Activated naive CD4-positive, alpha-beta T cell treated with anti-CD3 and anti-CD28 coated beads for 36 hours (primary cell): ENCODE measurements at regions of chr12 and their contacts with region 1.

Region 1: DNA sequence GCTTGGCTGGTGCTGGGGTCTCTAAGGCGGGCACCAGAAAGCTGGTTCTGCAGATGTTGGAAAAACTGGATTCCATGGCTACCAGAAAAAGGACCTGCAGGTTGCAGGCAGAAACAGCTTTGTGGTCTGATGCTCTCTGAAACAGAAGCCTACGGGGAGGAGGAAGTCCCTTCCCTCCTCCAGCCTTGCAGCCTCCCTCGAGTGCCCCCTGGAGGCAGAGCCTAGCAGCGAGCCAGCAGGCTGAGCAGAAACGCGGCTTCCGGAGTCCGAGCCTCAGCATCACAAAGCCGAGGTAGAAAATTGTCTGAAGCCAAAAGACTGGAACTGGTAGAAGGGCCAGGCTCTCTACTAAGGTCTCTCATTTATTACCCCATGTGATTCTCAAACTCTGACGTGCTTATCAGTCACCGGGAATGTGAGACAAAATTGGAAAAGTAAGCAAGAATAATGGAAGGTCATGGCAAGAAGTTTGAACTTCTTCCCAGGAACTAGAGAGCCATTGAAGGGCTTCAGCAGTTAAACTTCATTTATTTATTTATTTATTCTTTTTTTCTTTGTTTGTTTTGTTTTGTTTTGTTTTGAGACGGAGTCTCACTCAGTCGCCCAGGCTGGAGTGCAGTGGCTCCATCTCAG is 82.2 kb upstream of the CPSF6 start:
- DNase-seq: peak; percentile 96
- H3K4me3 Mint-ChIP-seq: peak overlapping the region; percentile 43
- H3K27ac Mint-ChIP-seq: no peak overlapping the region
- H3K4me1 Mint-ChIP-seq: peaks cover 51% of the 10 kb centered on the region
- H3K27me3 Mint-ChIP-seq: no peaks in the 10 kb centered on the region

Region 2: DNA sequence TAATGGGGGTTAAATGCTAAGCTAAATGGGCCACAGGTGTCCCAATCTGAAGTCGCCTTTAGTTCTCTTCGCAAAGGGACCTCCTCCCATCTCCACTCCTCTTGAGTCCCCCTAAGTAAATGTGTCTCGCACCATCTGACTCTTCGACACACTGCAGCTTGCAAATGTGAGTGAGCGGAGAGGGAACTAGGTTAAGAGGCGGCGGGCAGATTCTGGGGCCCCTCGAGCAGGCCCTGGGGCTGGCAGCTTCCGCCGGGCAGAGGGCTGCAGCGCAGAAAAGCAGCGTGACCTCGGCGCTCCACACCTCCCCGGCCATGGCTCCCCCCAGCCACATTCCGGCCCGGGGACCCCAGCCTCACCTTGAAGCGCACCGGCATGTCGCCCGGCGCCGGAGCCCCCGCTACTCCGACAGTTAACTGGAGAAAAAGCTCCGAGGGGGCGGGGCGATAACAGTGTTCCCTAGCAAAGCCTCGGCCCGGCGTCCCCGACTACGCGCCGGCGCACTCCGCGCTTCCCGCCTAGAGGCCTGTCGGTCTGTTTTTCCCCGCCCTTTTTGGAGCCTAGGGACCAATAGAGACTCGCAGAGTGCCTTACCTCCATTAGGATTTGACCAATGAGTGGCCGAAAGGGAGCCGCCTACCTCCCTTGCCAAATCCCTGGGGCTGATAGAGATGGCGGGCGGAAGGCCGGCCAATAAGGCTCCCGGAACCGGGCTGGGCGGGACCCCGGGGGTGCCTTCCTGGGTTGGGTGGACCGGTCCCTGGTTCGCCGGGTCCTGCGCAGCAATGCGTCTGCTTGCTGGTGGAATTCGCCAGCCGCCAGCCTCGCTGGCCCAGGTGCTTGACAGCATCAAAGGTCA is 825.0 kb before region 1 on chr12 and contains the start of gene MDM1:
- CTCF ChIA-PET with region 1: no interaction called
- intact Hi-C with region 1: loop called (anchors 10 kb)
- DNase-seq: peak; percentile 96
- H3K4me3 Mint-ChIP-seq: peak within 1 kb of the TSS; percentile 84
- H3K27ac Mint-ChIP-seq: peak within 1 kb of the TSS; percentile 73
- H3K4me1 Mint-ChIP-seq: peaks cover 47% of the 10 kb centered on the region
- H3K27me3 Mint-ChIP-seq: no peaks in the 10 kb centered on the region
- total RNA-seq, gene MDM1: 16.5 to 20.8 TPM

Region 3: GRCh38 chr12:68998041-68998440 is 159.1 kb before region 1 on chr12:
- CTCF ChIA-PET with region 1: no interaction called
- intact Hi-C with region 1: no loop called
- DNase-seq: no peak
- H3K4me3 Mint-ChIP-seq: no peak overlapping the region
- H3K27ac Mint-ChIP-seq: no peak overlapping the region
- H3K4me1 Mint-ChIP-seq: no peaks in the 10 kb centered on the region
- H3K27me3 Mint-ChIP-seq: peaks cover 7% of the 10 kb centered on the region

Region 4: DNA sequence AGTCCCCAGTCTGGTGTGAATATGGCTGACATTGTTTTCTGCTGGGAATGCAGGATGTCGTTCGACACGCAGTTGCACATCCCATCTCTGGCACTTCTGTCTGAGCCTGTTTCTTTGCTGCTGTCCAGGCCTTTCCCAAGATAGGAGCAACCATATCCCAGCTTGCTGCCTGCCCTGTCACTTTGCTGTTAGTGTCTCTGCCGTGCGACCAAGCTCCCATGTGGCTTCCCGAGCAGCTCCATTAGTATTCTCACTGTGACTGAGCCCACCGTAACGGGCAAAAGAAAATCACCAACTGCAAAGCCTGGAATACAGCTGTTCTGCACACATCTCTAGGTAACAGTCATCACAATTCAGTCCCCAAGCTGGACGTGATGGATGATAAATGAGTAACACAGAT is 16.2 kb after region 1 on chr12:
- CTCF ChIA-PET with region 1: interaction called, 26 read pairs
- intact Hi-C with region 1: no loop called
- DNase-seq: no peak
- H3K4me3 Mint-ChIP-seq: no peak overlapping the region
- H3K27ac Mint-ChIP-seq: no peak overlapping the region
- H3K4me1 Mint-ChIP-seq: no peaks in the 10 kb centered on the region
- H3K27me3 Mint-ChIP-seq: no peaks in the 10 kb centered on the region

Region 5: DNA sequence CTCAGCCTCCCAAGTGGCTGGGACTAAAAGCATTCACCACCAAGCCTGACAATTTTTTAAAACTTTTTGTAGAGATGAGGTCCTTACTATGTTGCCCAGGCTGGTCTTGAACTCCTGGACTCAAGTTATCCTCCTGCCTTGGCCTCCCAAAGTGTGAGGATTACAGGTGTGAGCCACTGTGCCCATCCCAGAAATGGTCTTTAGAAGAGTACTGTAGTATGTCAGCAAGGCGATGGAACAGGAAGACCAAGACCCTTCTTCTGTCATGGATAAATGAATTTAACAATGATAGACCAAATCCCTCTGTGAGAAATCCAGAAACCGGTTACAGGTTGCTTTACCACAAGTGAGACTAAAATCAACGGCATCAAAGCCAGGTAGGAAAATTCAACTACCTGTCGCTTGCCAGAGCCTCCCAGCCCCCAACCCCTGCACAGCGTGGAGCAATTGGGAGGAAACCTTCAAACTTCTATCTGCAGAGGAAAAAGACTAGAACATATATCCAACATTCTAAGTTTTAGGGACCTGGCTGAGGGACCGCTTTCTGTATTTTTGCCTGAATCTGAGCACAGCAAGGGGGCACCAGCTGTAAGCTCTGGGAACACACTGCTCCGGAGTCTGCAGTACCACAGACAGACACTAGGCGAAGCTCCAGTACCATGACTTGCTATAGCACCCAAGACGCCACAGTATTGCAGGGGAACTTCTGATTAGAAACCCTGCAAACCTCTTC is 133.6 kb after region 1 on chr12:
- CTCF ChIA-PET with region 1: interaction called, 9 read pairs
- intact Hi-C with region 1: loop called (anchors 1 kb)
- DNase-seq: peak; percentile 95
- H3K4me3 Mint-ChIP-seq: peak overlapping the region; percentile 5
- H3K27ac Mint-ChIP-seq: no peak overlapping the region
- H3K4me1 Mint-ChIP-seq: peaks cover 10% of the 10 kb centered on the region
- H3K27me3 Mint-ChIP-seq: peaks cover 5% of the 10 kb centered on the region

Region 6: DNA sequence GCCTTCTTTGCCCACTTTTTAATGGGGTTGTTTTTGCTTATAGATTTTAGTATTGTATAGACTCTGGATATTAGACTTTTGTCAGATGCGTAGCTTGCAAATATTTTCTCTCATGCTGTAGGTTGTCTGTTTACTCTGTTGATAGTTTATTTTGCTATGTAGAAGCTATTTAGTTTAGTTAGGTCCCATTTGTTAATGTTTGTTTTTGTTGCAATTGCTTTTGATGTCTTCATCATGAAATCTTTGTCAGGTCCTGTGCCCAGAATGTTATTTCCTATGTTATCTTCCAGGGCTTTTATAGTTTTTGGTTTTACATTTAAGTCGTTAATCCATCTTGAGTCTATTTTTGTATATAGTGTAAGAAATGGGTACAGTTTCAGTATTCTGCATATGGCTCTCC is 161.1 kb after region 1 on chr12:
- CTCF ChIA-PET with region 1: no interaction called
- intact Hi-C with region 1: no loop called
- DNase-seq: no peak
- H3K4me3 Mint-ChIP-seq: no peak overlapping the region
- H3K27ac Mint-ChIP-seq: no peak overlapping the region
- H3K4me1 Mint-ChIP-seq: no peaks in the 10 kb centered on the region
- H3K27me3 Mint-ChIP-seq: no peaks in the 10 kb centered on the region

Region 7: GRCh38 chr12:69570545-69571399 is 413.6 kb after region 1 on chr12:
- CTCF ChIA-PET with region 1: interaction called, 3 read pairs
- intact Hi-C with region 1: loop called (anchors 1 kb)
- DNase-seq: peak; percentile 75
- H3K4me3 Mint-ChIP-seq: no peak overlapping the region
- H3K27ac Mint-ChIP-seq: no peak overlapping the region
- H3K4me1 Mint-ChIP-seq: peaks cover 11% of the 10 kb centered on the region
- H3K27me3 Mint-ChIP-seq: no peaks in the 10 kb centered on the region

Region 8: DNA sequence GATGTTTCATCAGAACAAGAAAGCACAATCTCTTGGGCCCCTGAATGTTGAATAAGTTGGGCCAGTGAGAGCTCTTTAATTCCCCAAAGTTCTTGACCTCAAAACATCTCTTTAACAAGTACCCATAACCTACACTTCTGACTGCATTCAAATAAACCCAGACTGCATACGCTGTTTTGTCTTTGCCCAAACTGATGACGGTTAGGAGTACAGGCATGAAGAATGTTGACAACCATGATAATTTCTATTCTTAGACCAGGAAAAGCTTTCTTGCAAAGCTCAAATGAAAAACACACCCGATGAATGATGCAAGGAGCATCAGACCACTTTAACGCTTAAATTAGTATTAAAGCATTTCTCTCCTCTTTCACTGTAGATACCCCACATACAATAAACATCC is 569.8 kb after region 1 on chr12:
- CTCF ChIA-PET with region 1: no interaction called
- intact Hi-C with region 1: no loop called
- DNase-seq: no peak
- H3K4me3 Mint-ChIP-seq: no peak overlapping the region
- H3K27ac Mint-ChIP-seq: no peak overlapping the region
- H3K4me1 Mint-ChIP-seq: no peaks in the 10 kb centered on the region
- H3K27me3 Mint-ChIP-seq: no peaks in the 10 kb centered on the region

Region 9: GRCh38 chr12:69738351-69739286 is 581.5 kb after region 1 on chr12 and contains the start of gene RAB3IP:
- CTCF ChIA-PET with region 1: no interaction called
- intact Hi-C with region 1: loop called (anchors 1 kb)
- DNase-seq: peak; percentile 94
- H3K4me3 Mint-ChIP-seq: peak within 1 kb of the TSS; percentile 77
- H3K27ac Mint-ChIP-seq: peak within 1 kb of the TSS; percentile 75
- H3K4me1 Mint-ChIP-seq: peaks cover 18% of the 10 kb centered on the region
- H3K27me3 Mint-ChIP-seq: no peaks in the 10 kb centered on the region
- total RNA-seq, gene RAB3IP: 23.0 to 25.4 TPM